Activated CD4-positive, alpha-beta T cell treated with anti-CD3 and anti-CD28 coated beads for 36 hours (primary cell): ENCODE measurements at regions of chr9 and their contacts with region 1.

Region 1: DNA sequence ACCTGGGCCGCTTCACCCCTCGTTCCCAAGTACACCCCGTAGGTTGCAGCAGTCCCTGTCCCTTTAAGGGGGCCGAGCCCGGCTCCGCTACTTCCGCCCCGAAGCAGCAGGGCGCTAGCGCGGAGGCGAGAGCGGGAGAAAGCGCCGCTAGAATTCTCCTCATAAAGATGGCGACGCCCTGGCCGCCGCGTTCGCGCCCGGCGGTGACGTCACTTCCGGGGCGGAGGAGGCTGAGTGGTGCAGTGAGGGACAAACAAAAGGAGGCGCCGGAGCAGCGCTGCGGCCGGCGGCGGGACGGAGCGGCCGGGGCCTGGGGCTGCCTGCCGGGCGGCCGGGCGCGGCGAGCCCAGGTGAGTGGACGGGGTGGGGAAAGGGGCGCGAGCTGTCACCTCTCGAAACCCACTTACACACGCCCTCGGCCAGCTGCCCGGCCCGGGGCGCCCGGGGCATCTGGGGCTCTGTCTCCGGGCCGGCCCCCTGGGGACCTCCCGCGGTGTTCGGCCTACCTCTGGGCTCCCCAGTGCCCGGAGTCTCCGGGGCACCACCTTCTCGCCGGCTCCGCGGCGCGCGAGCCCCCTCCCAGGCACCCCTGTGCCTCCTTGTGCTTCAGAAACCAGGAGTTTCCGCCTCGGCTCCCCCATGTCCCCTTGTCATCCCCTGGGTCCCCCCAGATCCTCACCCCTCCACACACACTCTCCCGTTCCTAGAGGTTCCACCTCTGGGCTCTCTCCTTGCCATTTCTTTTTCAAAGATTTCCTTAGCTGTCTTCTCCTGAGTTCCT is at the starts of genes KYAT1 and LRRC8A:
- DNase-seq: peak; percentile 99
- ATAC-seq: peak; percentile 95
- H3K4me3 Mint-ChIP-seq: peak within 1 kb of the TSS; percentile 94
- H3K27ac Mint-ChIP-seq: peak within 1 kb of the TSS; percentile 91
- H3K4me1 Mint-ChIP-seq: peaks cover 56% of the 10 kb centered on the region
- H3K27me3 Mint-ChIP-seq: no peaks in the 10 kb centered on the region
- total RNA-seq, gene KYAT1: 14.8 to 18.5 TPM
- total RNA-seq, gene LRRC8A: 14.9 to 15.5 TPM

Region 2: GRCh38 chr9:128191406-128192046 is 690.6 kb before region 1 on chr9 and contains the start of gene CIZ1:
- CTCF ChIA-PET with region 1: no interaction called
- POLR2A ChIA-PET with region 1: no interaction called
- intact Hi-C with region 1: no loop called
- DNase-seq: peak; percentile 84
- ATAC-seq: peak; percentile 82
- H3K4me3 Mint-ChIP-seq: peak within 1 kb of the TSS; percentile 87
- H3K27ac Mint-ChIP-seq: peak within 1 kb of the TSS; percentile 85
- H3K4me1 Mint-ChIP-seq: peaks cover 28% of the 10 kb centered on the region
- H3K27me3 Mint-ChIP-seq: no peaks in the 10 kb centered on the region
- total RNA-seq, gene CIZ1: 79.5 to 110 TPM

Region 3: DNA sequence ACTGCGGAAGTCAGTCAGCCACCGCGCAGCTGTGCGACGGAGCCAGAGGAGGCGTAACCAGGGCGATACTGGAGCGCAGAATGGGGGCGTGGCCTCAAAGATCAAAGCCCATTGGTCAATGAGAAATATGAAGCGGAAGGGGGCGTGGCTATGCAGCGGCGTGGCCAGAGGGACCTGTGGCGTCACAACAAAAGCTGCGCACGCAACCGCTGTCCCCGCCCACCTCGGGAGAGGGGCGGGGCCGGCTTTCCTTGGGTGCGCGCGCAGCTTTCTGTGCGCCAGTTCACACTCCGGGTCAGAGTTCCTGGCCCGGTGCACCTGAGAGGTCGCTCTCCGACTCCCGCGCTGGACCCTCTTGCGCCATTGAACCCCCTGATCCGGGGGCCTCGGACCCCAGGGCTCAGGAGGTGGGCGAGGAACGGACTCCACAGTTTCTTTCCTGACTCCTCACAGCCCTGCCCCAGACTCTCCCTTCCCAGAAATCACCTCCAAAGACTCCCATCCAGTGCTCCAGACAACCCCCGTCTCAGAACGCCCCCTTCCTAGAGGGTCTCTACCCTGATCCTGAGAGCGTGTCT is 606.0 kb before region 1 on chr9 and contains the starts of genes GOLGA2 and SWI5:
- CTCF ChIA-PET with region 1: no interaction called
- POLR2A ChIA-PET with region 1: no interaction called
- intact Hi-C with region 1: loop called in 1 of 2 experiments (anchors 1 kb)
- DNase-seq: peak; percentile 100
- ATAC-seq: peak; percentile 99
- H3K4me3 Mint-ChIP-seq: peak within 1 kb of the TSS; percentile 97
- H3K27ac Mint-ChIP-seq: peak within 1 kb of the TSS; percentile 95
- H3K4me1 Mint-ChIP-seq: peaks cover 31% of the 10 kb centered on the region
- H3K27me3 Mint-ChIP-seq: no peaks in the 10 kb centered on the region
- total RNA-seq, gene GOLGA2: 28.4 to 29.4 TPM
- total RNA-seq, gene SWI5: 13.1 to 14.1 TPM

Region 4: DNA sequence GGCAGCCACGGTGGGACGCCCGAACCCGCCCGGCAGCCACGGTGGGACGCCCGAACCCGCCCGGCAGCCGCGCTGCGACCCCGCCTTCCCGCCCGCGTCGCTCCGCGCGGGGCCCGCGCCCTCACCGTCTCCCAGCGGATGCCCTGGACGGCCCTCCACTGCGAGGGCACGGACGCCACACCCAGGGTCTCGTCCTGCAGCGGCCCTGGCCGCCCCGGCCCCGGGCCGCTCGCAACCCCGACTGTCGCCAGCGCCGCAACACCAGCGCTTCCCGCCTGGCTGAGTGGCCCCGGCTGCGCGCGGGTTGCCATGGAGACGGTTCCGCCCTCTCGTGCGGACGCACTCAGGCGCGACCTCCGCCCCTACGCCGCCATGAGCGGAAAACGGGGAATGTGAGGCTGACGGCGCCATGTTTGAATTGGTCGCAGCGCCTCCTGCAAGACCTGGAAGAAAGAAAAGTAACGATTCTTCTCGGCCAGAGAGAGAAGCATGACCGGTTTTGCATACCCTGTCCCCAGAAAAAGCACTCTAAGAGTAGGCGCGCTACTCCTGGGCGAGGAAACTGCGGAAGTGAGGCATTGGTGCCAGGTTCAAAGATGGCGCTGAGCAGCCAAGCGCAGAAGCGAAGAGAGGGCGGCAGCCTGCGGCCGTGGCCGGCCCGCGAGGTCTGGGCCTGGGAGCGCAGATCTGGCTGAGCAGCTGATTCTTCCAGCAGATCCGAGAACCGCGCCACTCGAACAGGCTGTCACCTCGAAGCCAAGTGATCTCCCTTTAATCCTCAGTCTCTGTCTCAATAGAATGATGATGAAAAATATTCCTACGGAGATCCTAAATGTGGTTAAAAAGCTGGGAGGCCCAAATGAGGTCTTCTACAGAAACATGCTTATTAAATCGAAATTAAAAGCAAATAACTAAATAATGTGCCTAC is 225.4 kb before region 1 on chr9 and contains the start of gene DYNC2I2:
- CTCF ChIA-PET with region 1: no interaction called
- POLR2A ChIA-PET with region 1: no interaction called
- intact Hi-C with region 1: loop called in 1 of 2 experiments (anchors 2 kb)
- DNase-seq: peak; percentile 99
- ATAC-seq: peak; percentile 98
- H3K4me3 Mint-ChIP-seq: peak within 1 kb of the TSS; percentile 82
- H3K27ac Mint-ChIP-seq: peak within 1 kb of the TSS; percentile 100
- H3K4me1 Mint-ChIP-seq: peaks cover 6% of the 10 kb centered on the region
- H3K27me3 Mint-ChIP-seq: no peaks in the 10 kb centered on the region
- total RNA-seq, gene DYNC2I2: 26.7 to 35.7 TPM

Region 5: GRCh38 chr9:128786681-128787601 is 95.2 kb before region 1 on chr9 and contains the start of gene TBC1D13:
- CTCF ChIA-PET with region 1: no interaction called
- POLR2A ChIA-PET with region 1: no interaction called
- intact Hi-C with region 1: loop called in 1 of 2 experiments (anchors 1 kb)
- DNase-seq: peak; percentile 94
- ATAC-seq: peak; percentile 97
- H3K4me3 Mint-ChIP-seq: peak within 1 kb of the TSS; percentile 87
- H3K27ac Mint-ChIP-seq: peak within 1 kb of the TSS; percentile 87
- H3K4me1 Mint-ChIP-seq: peaks cover 18% of the 10 kb centered on the region
- H3K27me3 Mint-ChIP-seq: no peaks in the 10 kb centered on the region
- total RNA-seq, gene TBC1D13: 10.5 to 14.0 TPM

Region 6: GRCh38 chr9:128902351-128903078 is 20.4 kb after region 1 on chr9:
- CTCF ChIA-PET with region 1: no interaction called
- POLR2A ChIA-PET with region 1: no interaction called
- intact Hi-C with region 1: loop called (anchors 1 to 2 kb)
- DNase-seq: peak; percentile 92
- ATAC-seq: peak; percentile 86
- H3K4me3 Mint-ChIP-seq: peak overlapping the region; percentile 21
- H3K27ac Mint-ChIP-seq: peak overlapping the region; percentile 86
- H3K4me1 Mint-ChIP-seq: peaks cover 68% of the 10 kb centered on the region
- H3K27me3 Mint-ChIP-seq: no peaks in the 10 kb centered on the region

Region 7: DNA sequence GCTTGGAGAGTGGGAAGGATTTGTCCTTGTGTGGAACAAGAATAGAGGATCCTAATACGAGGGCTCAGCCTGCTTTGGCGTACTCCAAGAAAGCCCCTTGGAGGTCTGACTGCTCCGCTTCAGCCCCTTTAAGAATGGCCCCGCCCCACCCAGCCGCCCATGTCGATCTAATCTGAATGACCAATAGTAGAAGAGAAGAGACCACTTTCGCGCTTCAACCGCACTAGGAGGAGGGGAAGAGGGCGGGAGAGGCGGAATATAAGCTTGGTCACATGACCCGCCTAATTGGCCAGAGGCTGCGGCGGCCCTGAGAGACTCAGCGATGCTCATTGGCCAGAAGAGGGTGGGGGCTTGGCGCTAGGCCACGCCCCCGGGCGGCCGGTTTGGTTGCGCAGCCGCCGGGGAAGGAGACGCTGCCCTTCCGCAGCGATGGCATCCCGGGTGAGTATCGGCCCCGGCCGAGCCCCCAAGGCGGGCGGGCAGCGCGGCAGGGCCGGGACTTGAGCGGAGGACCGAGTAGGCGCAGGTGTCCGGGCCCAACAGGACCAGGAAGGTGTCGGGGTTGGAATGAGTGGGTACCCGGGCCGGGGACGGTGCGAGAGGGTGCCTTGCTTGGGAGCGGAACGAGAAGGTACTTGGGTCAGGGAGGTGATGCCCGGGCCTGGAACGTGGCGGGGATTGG is 154.3 kb after region 1 on chr9 and contains the start of gene MIGA2:
- CTCF ChIA-PET with region 1: no interaction called
- POLR2A ChIA-PET with region 1: no interaction called
- intact Hi-C with region 1: loop called in 1 of 2 experiments (anchors 1 kb)
- DNase-seq: peak; percentile 96
- ATAC-seq: peak; percentile 99
- H3K4me3 Mint-ChIP-seq: peak within 1 kb of the TSS; percentile 98
- H3K27ac Mint-ChIP-seq: peak within 1 kb of the TSS; percentile 83
- H3K4me1 Mint-ChIP-seq: peaks cover 27% of the 10 kb centered on the region
- H3K27me3 Mint-ChIP-seq: no peaks in the 10 kb centered on the region
- total RNA-seq, gene MIGA2: 15.7 to 25.8 TPM